HEK293 (cell line): ENCODE measurements at regions of chr22 and their contacts with region 1.

Region 1: DNA sequence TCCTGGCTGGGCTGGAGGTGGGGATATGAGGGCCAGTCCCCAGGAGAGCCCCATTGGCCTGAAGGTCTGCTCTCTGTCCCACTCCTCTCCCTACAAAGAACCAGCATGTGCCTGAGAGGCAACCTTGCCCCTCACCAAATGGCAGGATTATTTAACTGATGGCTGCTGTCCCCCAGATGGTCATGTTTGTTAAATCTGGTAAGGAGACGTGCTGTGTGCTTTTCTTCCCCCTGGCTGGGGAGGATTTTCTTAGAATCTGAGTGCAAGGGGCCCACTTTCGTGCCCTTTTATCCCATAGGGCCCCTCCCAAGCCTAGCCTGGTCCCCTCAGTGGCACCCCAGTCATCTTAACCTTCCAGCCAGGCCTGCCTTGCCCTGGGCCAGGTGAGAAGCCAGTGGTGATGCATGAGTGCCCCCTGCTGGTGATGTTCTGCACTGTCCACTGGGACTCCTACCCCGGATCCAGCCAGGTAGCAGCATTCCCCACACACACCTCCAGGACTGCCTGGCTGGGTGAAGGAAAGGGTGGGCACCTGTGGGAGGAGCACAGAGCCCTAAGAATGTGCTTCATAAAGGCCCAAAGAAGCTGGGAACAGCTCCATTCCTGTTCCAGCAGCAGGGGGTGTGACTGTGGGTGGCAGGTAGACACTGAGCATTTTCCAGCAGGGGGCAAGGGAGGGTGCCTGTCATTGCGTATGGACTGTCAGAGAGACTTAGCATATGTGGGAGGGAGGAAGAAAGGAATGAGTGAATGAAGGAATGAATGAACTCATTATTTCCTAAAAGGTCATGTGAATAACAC is 28.9 kb downstream of the MFNG start:
- H3K4me3 ChIP-seq: no peak overlapping the region
- H3K27ac ChIP-seq: no peak overlapping the region
- H3K4me1 ChIP-seq: 0 out of 2 replicates have a peak, but pooled peaks cover 4% of the 10 kb centered on the region
- CTCF ChIP-seq: peak; percentile 97

Region 2: DNA sequence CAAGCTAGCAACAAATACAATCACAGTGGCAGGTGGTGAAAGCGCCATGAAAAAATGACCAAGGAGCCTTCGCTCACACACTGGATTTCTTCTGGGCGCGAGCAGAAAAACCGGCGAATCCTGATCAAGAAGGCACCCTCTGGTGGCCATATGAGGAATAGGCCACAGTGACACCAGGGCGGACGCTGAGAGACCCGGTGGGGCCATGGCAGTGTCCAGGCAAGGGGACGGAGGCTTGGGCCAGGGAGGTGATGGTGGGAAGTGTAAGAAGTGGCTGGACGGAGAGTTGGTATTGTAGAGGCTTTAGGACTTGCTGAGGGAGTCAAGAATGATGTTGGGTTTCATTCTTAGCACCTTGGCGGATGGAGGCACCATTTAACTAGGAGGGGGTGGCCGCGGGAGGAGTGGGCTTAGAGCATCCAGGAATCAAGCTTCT is 196.4 kb before region 1 on chr22:
- CTCF ChIA-PET with region 1: interaction called, 20 read pairs
- POLR2A ChIA-PET with region 1: no interaction called
- H3K4me3 ChIP-seq: no peak overlapping the region
- H3K27ac ChIP-seq: no peak overlapping the region
- H3K4me1 ChIP-seq: no peaks in the 10 kb centered on the region
- CTCF ChIP-seq: peak; percentile 62

Region 3: DNA sequence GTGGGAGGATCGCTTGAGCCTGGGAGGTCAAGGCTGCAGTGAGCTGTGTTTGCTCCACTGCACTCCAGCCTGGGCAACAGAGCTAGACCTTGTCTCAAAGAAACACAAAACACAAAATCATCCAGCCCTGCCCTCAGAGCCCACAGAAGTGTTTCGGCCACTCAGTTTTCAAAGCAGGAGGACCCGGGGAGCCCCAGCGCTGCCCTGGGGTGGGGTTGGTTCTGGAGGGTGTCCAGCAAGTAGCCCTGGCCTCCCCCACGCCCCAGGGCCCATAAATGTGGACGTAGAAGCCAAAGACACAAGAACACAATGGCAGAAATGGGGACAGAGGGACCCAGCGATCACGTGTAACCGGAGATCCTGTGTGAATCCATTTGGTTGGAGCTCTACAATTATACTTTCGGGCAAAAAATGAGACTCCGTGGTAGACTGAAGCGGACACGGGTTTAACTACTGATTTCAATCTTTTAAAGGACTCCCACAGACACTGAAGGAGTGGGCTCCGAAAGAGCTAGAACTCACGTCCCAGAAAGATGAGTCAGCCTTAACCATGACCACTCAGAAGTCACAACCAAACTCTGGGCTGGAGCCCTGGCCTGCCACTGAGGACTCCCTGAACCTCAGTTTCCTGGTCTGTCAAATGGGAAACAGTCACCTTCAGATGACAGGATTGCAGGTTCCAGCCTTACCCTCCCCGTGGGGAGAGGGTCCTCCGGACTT is 184.0 kb before region 1 on chr22:
- CTCF ChIA-PET with region 1: interaction called, 12 read pairs
- POLR2A ChIA-PET with region 1: no interaction called
- H3K4me3 ChIP-seq: no peak overlapping the region
- H3K27ac ChIP-seq: no peak overlapping the region
- H3K4me1 ChIP-seq: no peaks in the 10 kb centered on the region
- CTCF ChIP-seq: no peak

Region 4: GRCh38 chr22:37309211-37310074 is 147.8 kb before region 1 on chr22:
- CTCF ChIA-PET with region 1: interaction called, 273 read pairs
- POLR2A ChIA-PET with region 1: interaction called, 3 read pairs
- H3K4me3 ChIP-seq: no peak overlapping the region
- H3K27ac ChIP-seq: no peak overlapping the region
- H3K4me1 ChIP-seq: 0 out of 2 replicates have a peak, but pooled peaks cover 4% of the 10 kb centered on the region
- CTCF ChIP-seq: no peak

Region 5: GRCh38 chr22:37324340-37325038 is 132.8 kb before region 1 on chr22:
- CTCF ChIA-PET with region 1: interaction called, 57 read pairs
- POLR2A ChIA-PET with region 1: interaction called, 3 read pairs
- H3K4me3 ChIP-seq: no peak overlapping the region
- H3K27ac ChIP-seq: no peak overlapping the region
- H3K4me1 ChIP-seq: no peaks in the 10 kb centered on the region
- CTCF ChIP-seq: no peak

Region 6: GRCh38 chr22:37353839-37354238 is 103.5 kb before region 1 on chr22:
- CTCF ChIA-PET with region 1: interaction called, 12 read pairs
- POLR2A ChIA-PET with region 1: no interaction called
- H3K4me3 ChIP-seq: no peak overlapping the region
- H3K27ac ChIP-seq: no peak overlapping the region
- H3K4me1 ChIP-seq: no peaks in the 10 kb centered on the region
- CTCF ChIP-seq: no peak

Region 7: GRCh38 chr22:37472418-37473006 is 15.2 kb after region 1 on chr22:
- CTCF ChIA-PET with region 1: interaction called, 18 read pairs
- POLR2A ChIA-PET with region 1: no interaction called
- H3K4me3 ChIP-seq: no peak overlapping the region
- H3K27ac ChIP-seq: no peak overlapping the region
- H3K4me1 ChIP-seq: no peaks in the 10 kb centered on the region
- CTCF ChIP-seq: peak; percentile 63